Heart left ventricle (tissue), 16 donors: ENCODE measurements at regions of chr19 and their contacts with region 1.

Region 1: GRCh38 chr19:14147797-14148605 is 11.6 kb upstream of the ASF1B start:
- DNase-seq: peak; percentile 71 to 89 (median 79)
- ATAC-seq: peak; percentile 81 to 89 (median 86)
- H3K4me3 ChIP-seq: peak overlapping the region in 4 of 12 donors; percentile 4 to 32 (median 10)
- H3K27ac ChIP-seq: peak overlapping the region in 11 of 12 donors; percentile 55 to 92 (median 83)
- H3K4me1 ChIP-seq: peaks cover 9 to 40% (median 27%) of the 10 kb centered on the region in 12 donors
- H3K27me3 ChIP-seq: no peaks in the 10 kb centered on the region
- CTCF ChIP-seq: peak; percentile 75 to 96 (median 88)
- POLR2A ChIP-seq: no peak

Region 2: GRCh38 chr19:14265290-14266036 is 117.5 kb after region 1 on chr19:
- intact Hi-C with region 1: loop called in 2 of 10 experiments (anchors 10 kb)
- DNase-seq: no peak
- ATAC-seq: no peak
- H3K4me3 ChIP-seq: peak overlapping the region in 1 of 12 donors; percentile 9
- H3K27ac ChIP-seq: no peak overlapping the region
- H3K4me1 ChIP-seq: peaks cover 0 to 8% (median 0%) of the 10 kb centered on the region in 12 donors
- H3K27me3 ChIP-seq: peaks cover 0 to 38% (median 9%) of the 10 kb centered on the region in 9 donors
- CTCF ChIP-seq: no peak
- POLR2A ChIP-seq: no peak

Region 3: DNA sequence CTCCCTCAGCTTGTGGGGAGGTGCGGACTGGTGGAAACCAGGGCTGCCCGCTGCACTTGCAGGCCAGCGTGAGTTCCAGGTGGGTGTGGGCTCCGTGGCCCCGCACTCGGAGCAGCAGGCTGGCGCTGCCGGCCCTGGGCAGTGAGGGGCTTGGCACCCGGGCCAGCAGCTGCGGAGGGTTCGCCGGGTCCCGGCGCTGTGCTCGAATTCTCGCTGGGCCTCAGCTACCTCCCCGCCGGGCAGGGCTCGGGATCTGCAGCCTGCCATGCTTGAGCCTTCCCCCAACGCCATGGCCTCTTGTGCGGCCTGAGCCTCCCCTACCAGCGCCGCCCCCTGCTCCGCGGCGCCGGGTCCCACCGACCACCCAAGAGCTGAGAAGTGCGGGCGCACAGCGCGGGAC is 129.6 kb after region 1 on chr19:
- intact Hi-C with region 1: loop called in 2 of 10 experiments (anchors 10 kb)
- DNase-seq: no peak
- ATAC-seq: no peak
- H3K4me3 ChIP-seq: no peak overlapping the region
- H3K27ac ChIP-seq: no peak overlapping the region
- H3K4me1 ChIP-seq: peaks cover 0 to 4% (median 0%) of the 10 kb centered on the region in 12 donors
- H3K27me3 ChIP-seq: peaks cover 0 to 31% (median under 1%) of the 10 kb centered on the region in 9 donors
- CTCF ChIP-seq: no peak
- POLR2A ChIP-seq: no peak

Region 4: DNA sequence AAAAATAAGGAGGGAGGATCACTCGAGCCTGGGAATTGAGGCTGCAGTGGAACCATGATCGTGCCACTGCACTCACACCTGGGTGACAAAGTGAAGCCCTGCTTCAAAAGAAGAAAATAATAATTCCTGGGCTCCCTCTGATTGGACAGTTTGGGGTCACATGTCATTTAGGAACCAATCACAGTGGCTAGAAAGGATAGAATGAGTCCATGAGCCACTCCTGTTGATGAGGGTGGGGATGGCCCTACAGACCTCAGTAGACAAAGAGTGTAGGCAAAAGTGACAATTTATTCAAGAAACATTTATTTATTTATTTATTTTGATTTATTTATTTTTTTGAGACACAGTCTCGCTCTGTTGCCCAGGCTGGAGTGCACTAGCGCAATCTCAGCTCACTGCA is 206.4 kb after region 1 on chr19:
- intact Hi-C with region 1: loop called in 9 of 10 experiments (anchors 2 to 5 kb)
- DNase-seq: no peak
- ATAC-seq: no peak
- H3K4me3 ChIP-seq: no peak overlapping the region
- H3K27ac ChIP-seq: no peak overlapping the region
- H3K4me1 ChIP-seq: peaks cover 0 to 34% (median 0%) of the 10 kb centered on the region in 12 donors
- H3K27me3 ChIP-seq: no peaks in the 10 kb centered on the region
- CTCF ChIP-seq: no peak
- POLR2A ChIP-seq: no peak

Region 5: GRCh38 chr19:14472202-14472938 is 324.4 kb after region 1 on chr19:
- intact Hi-C with region 1: loop called in 3 of 10 experiments (anchors 10 kb)
- DNase-seq: peak; percentile 72 to 89 (median 74)
- ATAC-seq: peak in 3 of 4 donors; percentile 46 to 61 (median 56)
- H3K4me3 ChIP-seq: peak overlapping the region in 8 of 12 donors; percentile 5 to 37 (median 22)
- H3K27ac ChIP-seq: no peak overlapping the region
- H3K4me1 ChIP-seq: peaks cover 4 to 52% (median 22%) of the 10 kb centered on the region in 12 donors
- H3K27me3 ChIP-seq: peaks cover 0 to 39% (median 16%) of the 10 kb centered on the region in 9 donors
- CTCF ChIP-seq: peak; percentile 96 to 99 (median 97)
- POLR2A ChIP-seq: no peak

Region 6: DNA sequence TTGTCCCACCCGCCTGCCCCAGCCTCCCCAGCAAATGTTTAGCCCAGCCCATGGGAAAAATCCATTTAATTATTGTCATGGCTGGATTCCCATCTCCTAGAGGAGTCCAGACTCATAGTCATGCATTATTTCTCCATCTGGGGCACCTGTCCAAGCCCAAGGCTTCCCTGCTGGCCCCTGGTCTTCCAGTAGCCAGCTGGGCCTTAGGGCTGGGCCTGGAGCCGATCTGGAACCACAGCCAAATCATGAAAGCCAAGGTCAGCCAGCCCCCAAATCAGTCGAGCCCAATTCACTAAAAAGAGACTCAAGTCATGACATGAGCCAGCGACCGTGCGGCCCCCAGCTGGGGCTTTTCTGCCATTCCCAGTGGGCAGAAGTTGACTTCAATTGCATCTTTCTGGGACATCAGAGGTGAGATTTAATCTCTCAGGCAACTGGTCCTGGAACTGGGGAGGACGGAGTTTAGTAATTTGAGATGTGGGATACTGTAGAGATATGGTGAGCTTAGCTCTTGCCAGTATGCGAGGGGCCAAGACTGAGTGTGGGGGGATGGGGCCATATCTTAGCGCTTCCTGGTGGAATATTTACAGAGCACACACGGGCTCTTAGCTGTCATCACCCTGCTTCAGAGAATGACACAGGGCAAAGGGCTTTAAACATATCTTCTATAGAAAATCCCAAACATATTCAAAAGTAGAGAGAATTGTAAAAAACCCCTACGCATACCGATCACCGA is 1340.7 kb after region 1 on chr19:
- intact Hi-C with region 1: no loop called
- DNase-seq: peak in 3 of 5 donors; percentile 43 to 73 (median 64)
- ATAC-seq: peak in 3 of 4 donors; percentile 34 to 89 (median 73)
- H3K4me3 ChIP-seq: no peak overlapping the region
- H3K27ac ChIP-seq: no peak overlapping the region
- H3K4me1 ChIP-seq: no peaks in the 10 kb centered on the region
- H3K27me3 ChIP-seq: no peaks in the 10 kb centered on the region
- CTCF ChIP-seq: no peak
- POLR2A ChIP-seq: no peak